ENCODE measurements at regions of chr18 and their contacts with region 1.

Region 1: GRCh38 chr18:56748698-56749268 is 97.6 kb downstream of the WDR7 start:
- DNase-seq: no peak
- H3K4me3 ChIP-seq: no peak overlapping the region
- H3K27ac ChIP-seq: no peak overlapping the region
- H3K4me1 ChIP-seq: peaks cover 0 to 18% (median 0%) of the 10 kb centered on the region in 6 donors
- H3K27me3 ChIP-seq: no peaks in the 10 kb centered on the region
- CTCF ChIP-seq: peak in 8 of 11 experiments; percentile 21 to 53 (median 48)
- POLR2A ChIP-seq: no peak

Region 2: DNA sequence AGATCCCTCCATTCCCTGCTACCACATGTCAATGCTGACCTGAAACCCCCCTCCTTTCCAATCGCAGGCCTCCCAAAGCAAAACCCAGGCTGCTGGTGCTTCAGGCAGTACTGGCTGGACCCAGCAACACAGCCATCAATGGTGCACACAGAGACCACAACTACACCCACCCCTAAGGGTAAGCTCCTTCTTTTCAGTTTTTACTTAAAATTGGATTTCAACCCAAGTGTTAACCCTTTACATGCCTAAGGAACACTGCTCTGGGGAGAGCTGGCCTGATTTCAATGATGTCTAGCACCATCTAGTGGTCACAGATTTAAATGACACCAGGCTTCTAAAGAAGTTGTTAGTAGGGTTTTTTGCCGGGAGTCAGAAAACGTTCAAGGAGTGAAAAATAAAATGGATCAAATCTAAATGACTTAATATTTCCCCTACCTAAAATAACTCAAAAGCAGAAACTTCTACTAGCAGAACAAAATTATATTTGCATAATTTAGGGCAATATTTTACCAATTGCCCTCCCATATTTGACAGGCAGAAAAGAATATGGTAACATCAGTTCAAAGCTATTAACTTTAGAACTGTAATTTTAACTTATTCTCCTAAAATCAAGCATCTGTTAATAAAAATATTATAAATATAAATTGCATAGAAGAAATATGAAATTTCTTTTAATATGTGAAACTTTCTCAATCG is 813.1 kb after region 1 on chr18:
- intact Hi-C with region 1: loop called (anchors 5 kb)
- DNase-seq: no peak
- H3K4me3 ChIP-seq: no peak overlapping the region
- H3K27ac ChIP-seq: no peak overlapping the region
- H3K4me1 ChIP-seq: peaks cover 0 to 4% (median 0%) of the 10 kb centered on the region in 6 donors
- H3K27me3 ChIP-seq: no peaks in the 10 kb centered on the region
- CTCF ChIP-seq: peak; percentile 38 to 82 (median 69)
- POLR2A ChIP-seq: no peak

Measured in spleen (tissue), 13 donors.